ENCODE measurements at regions of chr6 and their contacts with region 1.

Region 1: GRCh38 chr6:498795-499231 is 107.3 kb downstream of the IRF4 start:
- DNase-seq: peak; percentile 86
- ATAC-seq: peak; percentile 61
- H3K4me3 Mint-ChIP-seq: peak overlapping the region; percentile 73
- H3K27ac Mint-ChIP-seq: peak overlapping the region; percentile 96
- H3K4me1 Mint-ChIP-seq: peaks cover 84% of the 10 kb centered on the region
- H3K27me3 Mint-ChIP-seq: no peaks in the 10 kb centered on the region
- CTCF ChIP-seq: no peak

Region 2: GRCh38 chr6:379367-380181 is 119.2 kb before region 1 on chr6:
- CTCF ChIA-PET with region 1: no interaction called
- POLR2A ChIA-PET with region 1: no interaction called
- intact Hi-C with region 1: no loop called
- DNase-seq: no peak
- ATAC-seq: no peak
- H3K4me3 Mint-ChIP-seq: no peak overlapping the region
- H3K27ac Mint-ChIP-seq: no peak overlapping the region
- H3K4me1 Mint-ChIP-seq: peaks cover 10% of the 10 kb centered on the region
- H3K27me3 Mint-ChIP-seq: peaks cover 22% of the 10 kb centered on the region
- CTCF ChIP-seq: no peak

Region 3: DNA sequence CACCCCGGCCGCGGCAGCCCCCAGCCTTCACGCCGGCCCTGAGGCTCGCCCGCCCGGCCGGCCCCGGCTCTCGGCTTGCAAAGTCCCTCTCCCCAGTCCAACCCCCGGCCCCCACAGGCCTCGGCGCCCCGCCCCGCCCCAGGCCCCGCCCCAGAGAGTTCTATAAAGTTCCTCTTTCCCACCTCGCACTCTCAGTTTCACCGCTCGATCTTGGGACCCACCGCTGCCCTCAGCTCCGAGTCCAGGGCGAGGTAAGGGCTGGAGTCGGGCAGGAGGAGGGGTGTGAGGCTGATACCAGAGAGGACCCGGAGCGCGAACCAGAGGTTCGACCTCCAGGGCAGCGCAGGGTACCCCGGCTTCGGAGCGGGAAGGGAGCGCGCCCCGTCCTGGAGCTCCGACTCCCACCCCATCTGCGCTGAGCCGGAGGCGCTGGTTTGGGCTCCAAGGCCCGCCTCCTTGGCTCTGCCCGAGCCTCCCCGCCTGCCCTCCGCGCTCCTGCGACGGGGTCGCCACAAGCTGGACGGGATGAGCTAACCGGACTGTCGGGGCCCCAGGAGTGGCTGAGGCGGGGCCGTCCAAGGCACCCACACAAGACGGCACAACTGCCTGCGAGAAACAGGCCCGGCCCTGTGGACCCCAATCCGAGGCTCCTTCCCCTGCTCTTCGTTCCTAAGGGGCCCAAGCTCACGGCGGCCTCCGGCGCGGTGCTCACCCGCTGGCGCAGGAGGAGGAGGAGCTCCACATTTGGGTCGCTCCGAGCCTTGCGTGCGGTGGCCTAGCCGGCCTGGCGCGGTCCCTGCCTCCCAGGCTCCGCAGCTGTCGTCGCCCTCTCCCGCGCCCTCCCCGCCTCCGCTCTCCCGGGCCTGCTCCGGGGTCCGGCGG is 107.0 kb before region 1 on chr6 and contains the start of gene IRF4:
- CTCF ChIA-PET with region 1: interaction called, 8 read pairs
- POLR2A ChIA-PET with region 1: interaction called, 853 read pairs
- intact Hi-C with region 1: no loop called
- DNase-seq: peak; percentile 75
- ATAC-seq: peak; percentile 51
- H3K4me3 Mint-ChIP-seq: peak within 1 kb of the TSS; percentile 99
- H3K27ac Mint-ChIP-seq: peak within 1 kb of the TSS; percentile 97
- H3K4me1 Mint-ChIP-seq: peaks cover 52% of the 10 kb centered on the region
- H3K27me3 Mint-ChIP-seq: peaks cover 4% of the 10 kb centered on the region
- CTCF ChIP-seq: no peak
- total RNA-seq, gene IRF4: 409 to 439 TPM

Region 4: DNA sequence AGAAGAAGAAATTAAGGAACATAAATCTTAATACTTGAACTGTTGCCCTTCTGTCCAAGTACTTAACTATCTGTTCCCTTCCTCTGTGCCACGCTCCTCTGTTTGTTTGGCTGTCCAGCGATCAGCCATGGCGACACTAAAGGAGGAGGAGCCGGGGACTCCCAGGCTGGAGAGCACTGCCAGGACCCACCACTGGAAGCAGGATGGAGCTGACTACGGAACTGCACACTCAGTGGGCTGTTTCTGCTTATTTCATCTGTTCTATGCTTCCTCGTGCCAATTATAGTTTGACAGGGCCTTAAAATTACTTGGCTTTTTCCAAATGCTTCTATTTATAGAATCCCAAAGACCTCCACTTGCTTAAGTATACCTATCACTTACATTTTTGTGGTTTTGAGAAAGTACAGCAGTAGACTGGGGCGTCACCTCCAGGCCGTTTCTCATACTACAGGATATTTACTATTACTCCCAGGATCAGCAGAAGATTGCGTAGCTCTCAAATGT is 90.2 kb before region 1 on chr6:
- CTCF ChIA-PET with region 1: interaction called, 9 read pairs
- POLR2A ChIA-PET with region 1: interaction called, 853 read pairs
- intact Hi-C with region 1: loop called (anchors 5 kb)
- DNase-seq: no peak
- ATAC-seq: no peak
- H3K4me3 Mint-ChIP-seq: no peak overlapping the region
- H3K27ac Mint-ChIP-seq: peak overlapping the region; percentile 77
- H3K4me1 Mint-ChIP-seq: peaks cover 64% of the 10 kb centered on the region
- H3K27me3 Mint-ChIP-seq: no peaks in the 10 kb centered on the region
- CTCF ChIP-seq: peak; percentile 41

Region 5: GRCh38 chr6:474453-475185 is 24.2 kb before region 1 on chr6:
- CTCF ChIA-PET with region 1: interaction called, 7 read pairs
- POLR2A ChIA-PET with region 1: interaction called, 11 read pairs
- intact Hi-C with region 1: no loop called
- DNase-seq: peak; percentile 96
- ATAC-seq: peak; percentile 98
- H3K4me3 Mint-ChIP-seq: peak overlapping the region; percentile 40
- H3K27ac Mint-ChIP-seq: peak overlapping the region; percentile 88
- H3K4me1 Mint-ChIP-seq: peaks cover 73% of the 10 kb centered on the region
- H3K27me3 Mint-ChIP-seq: no peaks in the 10 kb centered on the region
- CTCF ChIP-seq: no peak

Region 6: DNA sequence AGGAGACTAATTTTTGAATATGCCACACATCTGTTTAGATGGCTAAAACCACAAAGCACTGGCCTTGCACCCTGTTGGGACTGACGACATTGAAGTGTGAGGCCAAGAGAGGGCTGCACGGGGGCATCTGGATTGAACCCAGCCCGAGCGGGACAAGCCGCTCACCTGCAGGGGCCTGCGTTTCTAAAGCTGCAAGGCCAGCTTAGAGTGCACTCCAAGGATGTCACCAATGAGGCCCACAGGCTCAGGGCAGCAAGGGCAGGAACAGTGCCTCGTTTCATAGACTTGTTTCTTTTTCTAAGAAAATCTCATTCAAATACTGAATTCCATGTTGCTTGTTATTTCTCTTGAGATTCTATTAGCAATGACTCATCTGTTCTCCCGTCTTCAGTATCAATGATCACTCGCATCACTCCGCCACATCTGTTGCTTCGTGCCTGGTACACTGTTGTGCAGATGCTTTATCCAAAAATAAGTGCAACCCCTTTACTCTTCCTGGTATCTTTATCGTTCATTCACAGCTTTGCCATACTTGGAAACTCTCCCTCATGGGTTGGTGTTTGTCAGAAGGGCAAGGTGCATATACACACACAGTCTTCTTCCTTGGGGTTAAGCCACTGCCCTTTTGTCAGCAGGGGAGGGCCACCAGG is 12.8 kb after region 1 on chr6:
- CTCF ChIA-PET with region 1: interaction called, 7 read pairs
- POLR2A ChIA-PET with region 1: interaction called, 23 read pairs
- intact Hi-C with region 1: no loop called
- DNase-seq: no peak
- ATAC-seq: peak; percentile 13
- H3K4me3 Mint-ChIP-seq: no peak overlapping the region
- H3K27ac Mint-ChIP-seq: peak overlapping the region; percentile 99
- H3K4me1 Mint-ChIP-seq: peaks cover 85% of the 10 kb centered on the region
- H3K27me3 Mint-ChIP-seq: no peaks in the 10 kb centered on the region
- CTCF ChIP-seq: no peak